Gastrocnemius medialis (tissue), 4 donors: ENCODE measurements at regions of chr11 and their contacts with region 1.

Region 1: DNA sequence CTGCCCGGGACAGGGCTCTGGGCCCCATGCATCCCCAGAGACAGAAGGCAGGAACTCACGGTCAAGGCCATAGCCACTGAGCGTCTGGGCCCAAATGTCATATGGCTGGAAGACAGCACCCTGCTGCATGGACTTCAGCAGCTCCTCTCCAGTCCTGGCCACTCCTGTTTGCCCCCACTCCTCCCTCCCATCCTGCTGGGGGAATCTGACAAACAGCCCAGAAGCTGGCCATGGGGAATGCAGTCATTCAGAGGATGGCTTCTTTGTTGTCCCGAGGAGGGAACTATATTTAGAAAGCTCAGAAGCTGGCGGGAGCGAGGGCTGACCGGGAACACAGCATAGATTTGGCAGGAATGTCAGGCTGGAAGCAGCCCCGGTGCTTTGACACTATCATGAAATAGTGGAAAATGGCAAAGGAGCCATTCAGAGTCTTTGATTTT is 35.0 kb downstream of the DKK3 start:
- DNase-seq: peak; percentile 31 to 57
- ATAC-seq: peak; percentile 82 to 87
- H3K4me3 ChIP-seq: no peak overlapping the region
- H3K27ac ChIP-seq: peak overlapping the region; percentile 15 to 70 (median 41)
- H3K4me1 ChIP-seq: peaks cover 39 to 42% of the 10 kb centered on the region in 2 donors
- H3K27me3 ChIP-seq: no peaks in the 10 kb centered on the region
- CTCF ChIP-seq: no peak
- POLR2A ChIP-seq: no peak

Region 2: DNA sequence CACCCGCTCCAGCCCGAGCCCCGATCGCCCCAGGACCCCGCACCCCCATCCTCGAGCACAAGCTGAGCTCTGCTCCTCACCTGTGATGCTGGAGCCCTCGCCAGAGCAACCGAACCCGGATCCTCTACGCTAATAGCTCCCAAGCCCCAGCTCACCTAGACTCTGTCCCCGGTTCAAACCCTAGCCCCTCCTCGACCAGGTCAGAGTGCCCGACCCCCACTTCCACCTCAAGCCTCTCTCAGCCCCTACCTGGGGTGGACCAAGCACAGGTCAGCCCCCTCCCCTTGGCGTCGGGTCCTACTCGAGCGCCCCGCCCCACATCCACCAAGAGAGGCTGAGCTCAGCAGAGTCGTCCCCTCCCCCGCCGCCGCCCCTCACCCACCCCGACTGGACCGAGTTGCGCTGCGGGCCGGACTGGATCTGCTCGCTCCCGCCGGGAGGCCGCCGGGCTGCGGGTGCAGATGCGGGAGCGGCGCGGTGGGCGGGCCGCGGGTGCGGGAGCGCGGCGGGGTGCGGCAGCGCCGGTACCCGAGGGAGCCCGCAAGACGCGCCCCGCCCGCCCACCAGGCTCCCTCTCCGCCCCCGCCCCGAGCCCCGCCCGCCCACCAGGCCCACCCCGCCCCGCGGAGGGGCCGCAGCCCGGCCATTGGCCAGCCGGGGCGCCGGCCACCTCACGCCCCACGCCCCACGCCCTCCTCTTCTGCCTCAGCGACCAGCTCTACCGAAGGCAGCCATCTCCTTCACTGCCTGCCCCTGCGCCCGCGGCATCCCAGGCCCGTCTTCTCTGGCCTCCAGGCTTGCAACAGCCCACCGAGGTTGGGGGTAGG is 35.6 kb after region 1 on chr11:
- in situ Hi-C with region 1: no loop called
- intact Hi-C with region 1: loop called (anchors 5 kb)
- DNase-seq: no peak
- ATAC-seq: peak in 1 of 2 donors; percentile 28
- H3K4me3 ChIP-seq: peak overlapping the region; percentile 47 to 55 (median 52)
- H3K27ac ChIP-seq: no peak overlapping the region
- H3K4me1 ChIP-seq: peaks cover 13 to 14% of the 10 kb centered on the region in 2 donors
- H3K27me3 ChIP-seq: peaks cover 33 to 38% (median 36%) of the 10 kb centered on the region in 3 donors
- CTCF ChIP-seq: no peak
- POLR2A ChIP-seq: no peak